ENCODE measurements at regions of chr19 and their contacts with region 1.

Region 1: DNA sequence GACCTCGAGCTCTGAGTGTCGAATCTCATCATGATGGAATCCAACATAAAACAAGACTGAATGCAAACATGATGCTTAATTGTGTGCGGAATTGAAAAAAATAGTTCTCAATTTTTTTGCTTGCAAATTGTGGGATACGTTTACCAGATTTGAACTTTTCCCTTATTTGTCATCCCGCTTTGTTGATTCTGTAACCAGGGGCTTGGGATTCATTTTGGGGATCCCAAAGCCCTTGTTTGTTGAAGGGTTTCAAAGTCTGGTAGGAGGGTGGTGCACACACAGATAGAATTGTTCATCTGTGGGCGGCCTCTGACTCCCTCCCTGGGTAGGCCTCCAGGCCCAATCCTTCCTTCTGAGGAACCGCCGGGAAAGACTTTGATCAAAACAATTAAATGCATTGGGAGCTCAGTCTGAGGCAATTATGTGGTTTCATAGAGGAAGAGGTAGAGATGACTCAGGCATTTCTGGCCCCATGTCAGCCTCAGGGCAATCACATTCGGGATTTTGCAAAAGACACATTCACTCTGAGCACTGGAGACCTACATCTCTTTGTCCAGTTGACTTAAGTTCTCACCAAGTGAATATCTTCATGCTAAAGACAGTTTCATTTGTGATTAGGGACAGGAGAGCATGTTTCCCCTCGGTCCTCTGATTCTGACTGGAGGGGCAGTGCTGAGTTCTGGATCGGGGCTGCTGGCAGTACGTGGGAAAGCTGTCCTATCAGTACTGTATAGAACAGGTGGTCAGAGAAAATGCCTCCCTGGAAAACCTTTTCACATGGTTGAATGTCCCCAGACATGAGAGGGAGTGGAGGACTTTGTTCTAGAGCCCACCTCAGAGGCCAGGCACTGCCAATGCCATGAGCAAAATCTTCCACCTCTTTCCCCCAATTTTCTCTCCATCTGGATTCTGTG is 27.8 kb upstream of the IGFL4 start:
- DNase-seq: peak; percentile 99
- H3K4me3 Mint-ChIP-seq: peak overlapping the region; percentile 41
- H3K27ac Mint-ChIP-seq: peak overlapping the region; percentile 77
- H3K4me1 Mint-ChIP-seq: peaks cover 62% of the 10 kb centered on the region
- H3K27me3 Mint-ChIP-seq: no peaks in the 10 kb centered on the region
- CTCF ChIP-seq: no peak

Region 2: GRCh38 chr19:45817010-45817724 is 251.4 kb before region 1 on chr19:
- CTCF ChIA-PET with region 1: no interaction called
- POLR2A ChIA-PET with region 1: no interaction called
- intact Hi-C with region 1: loop called (anchors 5 kb)
- DNase-seq: peak; percentile 93
- H3K4me3 Mint-ChIP-seq: no peak overlapping the region
- H3K27ac Mint-ChIP-seq: no peak overlapping the region
- H3K4me1 Mint-ChIP-seq: no peaks in the 10 kb centered on the region
- H3K27me3 Mint-ChIP-seq: no peaks in the 10 kb centered on the region
- CTCF ChIP-seq: peak; percentile 96

Region 3: DNA sequence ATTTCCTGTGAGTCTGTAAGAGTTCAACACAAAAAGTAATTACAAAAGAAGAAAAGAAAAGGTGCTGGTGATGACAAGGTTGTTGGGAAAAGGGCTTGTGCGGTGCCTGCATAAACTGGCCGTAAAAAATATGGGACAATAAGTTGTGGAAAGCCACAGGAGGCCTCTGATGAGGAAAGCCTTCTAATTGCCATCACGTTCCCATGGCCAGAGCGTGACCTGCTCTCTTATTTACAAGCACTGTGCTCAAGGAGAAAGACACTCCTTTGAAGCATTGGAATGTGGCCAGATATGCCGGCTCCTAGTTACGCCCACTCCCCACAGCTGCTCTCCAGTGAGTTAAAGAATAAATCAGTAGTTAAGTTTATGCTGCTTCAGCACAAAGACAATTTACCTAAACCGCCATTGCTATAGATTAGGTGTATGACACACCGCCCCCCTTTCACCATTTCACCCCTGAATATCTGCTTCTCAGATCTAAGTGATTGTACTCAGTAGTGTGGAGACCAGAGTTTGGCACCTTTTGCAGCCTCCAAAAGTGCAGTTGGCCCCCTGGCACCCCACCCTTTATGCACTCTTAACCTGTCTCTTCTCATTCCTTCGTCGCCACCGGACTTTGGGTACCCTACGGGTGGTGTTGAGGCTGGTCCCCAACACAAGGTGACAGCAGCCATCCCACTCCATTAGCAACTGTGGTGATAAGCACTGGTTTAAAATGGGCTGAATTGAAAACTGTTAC is 37.6 kb before region 1 on chr19:
- CTCF ChIA-PET with region 1: interaction called, 27 read pairs
- POLR2A ChIA-PET with region 1: interaction called, 10 read pairs
- intact Hi-C with region 1: no loop called
- DNase-seq: no peak
- H3K4me3 Mint-ChIP-seq: no peak overlapping the region
- H3K27ac Mint-ChIP-seq: no peak overlapping the region
- H3K4me1 Mint-ChIP-seq: peaks cover 6% of the 10 kb centered on the region
- H3K27me3 Mint-ChIP-seq: no peaks in the 10 kb centered on the region
- CTCF ChIP-seq: no peak

Region 4: DNA sequence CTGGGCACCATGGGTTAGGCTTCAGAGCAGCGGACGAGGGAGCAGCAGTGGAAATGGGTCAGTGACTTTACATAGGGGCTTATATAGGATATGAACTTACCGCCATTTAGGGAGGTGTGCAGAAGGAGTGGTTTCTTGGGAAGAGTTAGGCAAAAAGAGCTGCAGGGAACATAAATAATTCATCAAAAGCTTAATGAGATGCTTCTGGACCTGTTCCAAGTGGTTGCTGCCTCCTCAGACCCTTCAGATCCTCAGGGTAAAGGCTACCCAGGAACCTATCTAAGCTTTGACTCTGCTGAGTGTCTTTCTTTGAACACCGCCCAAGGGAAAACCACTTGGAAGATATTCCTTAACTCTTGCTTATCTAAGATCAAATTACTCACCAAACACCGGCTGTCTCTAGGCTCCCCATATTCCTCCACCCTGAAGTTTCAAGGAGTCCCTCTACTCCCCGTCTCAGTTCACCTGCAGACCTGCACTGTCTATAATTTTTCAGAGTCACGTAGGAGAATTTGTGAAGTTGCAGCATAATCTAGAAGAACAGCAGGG is 27.6 kb before region 1 on chr19 and contains the start of gene IGFL4:
- CTCF ChIA-PET with region 1: no interaction called
- POLR2A ChIA-PET with region 1: interaction called, 17 read pairs
- intact Hi-C with region 1: loop called (anchors 1 kb)
- DNase-seq: peak; percentile 51
- H3K4me3 Mint-ChIP-seq: no peak within 1 kb of the TSS
- H3K27ac Mint-ChIP-seq: no peak within 1 kb of the TSS
- H3K4me1 Mint-ChIP-seq: peaks cover 12% of the 10 kb centered on the region
- H3K27me3 Mint-ChIP-seq: peaks cover 46% of the 10 kb centered on the region
- CTCF ChIP-seq: no peak
- total RNA-seq, gene IGFL4: 0.54 TPM in 1 of 2 replicates, not detected in the other

Region 5: GRCh38 chr19:46056536-46056935 is 12.1 kb before region 1 on chr19:
- CTCF ChIA-PET with region 1: interaction called, 3 read pairs
- POLR2A ChIA-PET with region 1: interaction called, 10 read pairs
- intact Hi-C with region 1: no loop called
- DNase-seq: peak; percentile 61
- H3K4me3 Mint-ChIP-seq: no peak overlapping the region
- H3K27ac Mint-ChIP-seq: peak overlapping the region; percentile 10
- H3K4me1 Mint-ChIP-seq: peaks cover 9% of the 10 kb centered on the region
- H3K27me3 Mint-ChIP-seq: no peaks in the 10 kb centered on the region
- CTCF ChIP-seq: no peak

Region 6: GRCh38 chr19:46111376-46111775 is 42.8 kb after region 1 on chr19:
- CTCF ChIA-PET with region 1: no interaction called
- POLR2A ChIA-PET with region 1: no interaction called
- intact Hi-C with region 1: no loop called
- DNase-seq: peak; percentile 66
- H3K4me3 Mint-ChIP-seq: no peak overlapping the region
- H3K27ac Mint-ChIP-seq: no peak overlapping the region
- H3K4me1 Mint-ChIP-seq: peaks cover 22% of the 10 kb centered on the region
- H3K27me3 Mint-ChIP-seq: no peaks in the 10 kb centered on the region
- CTCF ChIP-seq: no peak